ENCODE measurements at regions of chr1 and their contacts with region 1.

Region 1: DNA sequence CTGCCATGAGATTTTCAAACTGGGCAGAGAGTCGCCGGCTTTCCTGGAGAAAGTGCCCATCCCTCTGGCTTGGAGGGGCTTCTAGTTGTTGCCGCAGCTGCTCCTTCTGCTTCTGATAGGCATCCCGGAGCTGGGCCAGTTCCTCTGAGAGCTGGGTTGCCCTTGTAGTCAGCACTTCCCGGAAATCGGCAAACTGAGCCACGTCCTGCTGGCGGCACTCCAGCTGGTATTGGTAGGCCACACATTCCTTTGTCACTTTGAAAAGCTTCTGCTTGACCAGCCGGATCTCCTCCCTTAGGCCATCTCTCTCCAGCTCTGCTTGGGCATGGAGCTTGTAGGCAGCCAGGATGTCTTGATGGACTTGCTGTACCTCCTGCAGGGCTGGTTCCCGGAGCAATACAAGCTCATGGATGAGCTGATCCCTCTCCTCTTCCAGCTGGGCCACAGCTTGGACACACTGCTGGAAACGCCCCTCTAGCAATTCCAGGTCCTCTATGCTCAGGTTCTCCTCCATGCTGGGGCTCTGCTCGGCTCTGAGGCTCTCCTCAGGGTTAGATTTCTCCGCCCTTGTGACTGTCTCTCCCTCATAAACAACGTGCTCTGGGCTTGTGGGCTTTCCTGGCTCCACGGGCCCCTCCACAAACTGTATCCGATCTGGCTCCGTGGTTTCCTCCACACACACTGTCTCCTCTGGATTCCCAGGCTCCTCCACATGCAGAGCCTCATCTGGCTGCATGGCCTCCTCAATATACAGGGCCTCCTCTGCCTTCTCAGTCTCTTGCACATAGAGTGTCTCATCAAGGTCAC is 7.3 kb downstream of the SYNC start:
- DNase-seq: peak; percentile 69 to 92
- H3K4me3 ChIP-seq: peak overlapping the region in 1 of 3 donors; percentile 41
- H3K27ac ChIP-seq: peak overlapping the region; percentile 45 to 68
- H3K4me1 ChIP-seq: peaks cover 0 to 9% of the 10 kb centered on the region in 2 donors
- H3K27me3 ChIP-seq: no peaks in the 10 kb centered on the region
- CTCF ChIP-seq: no peak
- POLR2A ChIP-seq: no peak

Region 2: DNA sequence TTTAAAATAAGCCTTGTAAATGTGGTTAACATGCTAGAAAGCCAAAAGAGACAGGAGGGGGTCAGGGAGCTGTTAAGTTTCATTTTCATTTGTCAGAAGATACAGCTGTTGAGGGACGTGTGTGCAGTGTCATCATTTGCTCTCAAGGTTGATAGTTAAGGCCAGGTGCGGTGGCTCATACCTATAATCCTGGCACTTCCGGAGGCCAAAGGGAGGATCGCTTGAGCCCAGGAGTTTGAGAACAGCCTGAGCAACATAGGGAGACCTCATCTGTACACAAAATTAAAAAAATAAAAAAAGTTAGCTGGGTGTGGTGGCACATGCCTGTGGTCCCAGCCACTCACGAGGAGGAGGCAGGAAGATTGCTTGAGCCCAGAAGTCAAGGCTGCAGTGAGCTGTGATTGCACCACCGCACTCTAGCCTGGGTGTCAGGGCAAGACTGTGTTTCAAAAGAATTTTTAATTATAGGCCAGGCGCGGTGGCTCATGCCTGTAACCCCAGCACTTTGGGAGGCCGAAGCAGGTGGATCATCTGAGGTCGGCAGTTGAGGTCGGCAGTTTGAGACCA is 67.6 kb before region 1 on chr1:
- intact Hi-C with region 1: loop called (anchors 2 kb)
- DNase-seq: no peak
- H3K4me3 ChIP-seq: no peak overlapping the region
- H3K27ac ChIP-seq: no peak overlapping the region
- H3K4me1 ChIP-seq: no peaks in the 10 kb centered on the region
- H3K27me3 ChIP-seq: no peaks in the 10 kb centered on the region
- CTCF ChIP-seq: no peak
- POLR2A ChIP-seq: no peak

Region 3: DNA sequence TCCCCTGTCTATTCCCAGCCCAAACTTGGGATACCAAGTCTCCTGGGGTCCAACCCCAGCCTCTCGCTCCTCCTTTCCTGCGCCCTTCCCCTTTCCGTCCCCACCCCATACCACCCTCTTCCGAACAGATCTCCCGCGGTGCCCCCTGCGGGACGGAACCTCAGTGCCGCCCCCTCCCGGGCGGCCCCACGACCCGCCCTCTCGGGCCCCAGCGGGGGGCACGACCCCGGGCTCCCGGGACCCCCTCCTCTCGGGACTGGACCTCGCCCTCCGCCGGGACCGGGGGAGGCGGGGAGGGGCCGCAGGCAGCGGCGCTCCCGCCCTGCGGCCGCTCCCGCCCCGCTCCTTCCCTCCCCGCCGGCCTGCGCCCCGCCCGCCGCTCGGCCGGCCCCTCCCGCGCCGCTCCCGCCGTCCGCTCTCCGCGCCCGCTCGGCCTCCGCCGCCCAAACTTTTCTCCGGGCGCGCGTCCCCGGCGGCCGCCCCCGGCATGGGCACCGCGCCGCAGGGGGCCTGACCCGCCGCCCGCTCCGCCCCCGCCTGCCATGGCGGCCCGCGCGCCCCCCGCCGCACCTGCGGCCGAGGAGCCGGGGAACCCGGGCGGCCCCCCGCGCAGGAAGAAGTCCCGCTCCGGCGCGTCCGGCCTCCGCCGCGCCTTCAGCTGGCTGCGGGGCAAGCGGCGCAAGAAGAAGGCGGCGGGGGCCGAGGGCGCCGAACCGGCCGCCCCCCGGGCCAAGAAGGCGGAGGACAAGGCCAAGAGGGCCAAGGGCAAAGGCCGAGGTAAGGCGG is 46.3 kb after region 1 on chr1:
- intact Hi-C with region 1: no loop called
- DNase-seq: no peak
- H3K4me3 ChIP-seq: peak overlapping the region; percentile 71 to 93 (median 75)
- H3K27ac ChIP-seq: peak overlapping the region; percentile 99
- H3K4me1 ChIP-seq: peaks cover 4 to 11% of the 10 kb centered on the region in 2 donors
- H3K27me3 ChIP-seq: no peaks in the 10 kb centered on the region
- CTCF ChIP-seq: peak in 1 of 3 donors; percentile 30
- POLR2A ChIP-seq: no peak